ENCODE measurements at regions of chr5 and their contacts with region 1.

Region 1: DNA sequence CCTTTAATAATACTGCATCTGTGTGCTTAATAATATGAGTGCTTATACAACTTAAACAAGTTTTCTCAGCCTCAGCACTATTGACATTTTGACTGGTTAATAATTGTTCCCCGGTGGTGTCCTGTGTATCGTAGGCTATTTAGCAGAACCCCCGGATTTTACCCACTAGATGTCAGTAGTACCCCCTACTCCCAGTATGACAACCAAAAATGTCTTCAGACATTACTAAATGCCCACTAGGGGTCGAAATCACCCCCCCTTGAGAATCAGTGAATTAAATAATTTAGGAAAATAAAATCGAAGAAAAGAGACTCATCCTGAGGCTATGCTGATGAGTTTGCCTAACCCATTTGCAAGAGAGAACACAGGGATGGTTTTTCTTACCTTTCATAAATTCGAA is 166.3 kb downstream of the ATP10B start:
- DNase-seq: no peak
- H3K4me3 ChIP-seq: no peak overlapping the region
- H3K27ac ChIP-seq: no peak overlapping the region
- H3K27me3 ChIP-seq: no peaks in the 10 kb centered on the region
- CTCF ChIP-seq: peak in 52 of 56 donors; percentile 12 to 64 (median 42)

Region 2: GRCh38 chr5:160787240-160787639 is 101.5 kb after region 1 on chr5:
- intact Hi-C with region 1: loop called in 1 of 2 experiments (anchors 10 kb)
- DNase-seq: no peak
- H3K4me3 ChIP-seq: no peak overlapping the region
- H3K27ac ChIP-seq: peak overlapping the region in 39 of 59 donors; percentile 4 to 83 (median 65)
- H3K27me3 ChIP-seq: no peaks in the 10 kb centered on the region
- CTCF ChIP-seq: peak in 48 of 56 donors; percentile 13 to 59 (median 40)

Region 3: DNA sequence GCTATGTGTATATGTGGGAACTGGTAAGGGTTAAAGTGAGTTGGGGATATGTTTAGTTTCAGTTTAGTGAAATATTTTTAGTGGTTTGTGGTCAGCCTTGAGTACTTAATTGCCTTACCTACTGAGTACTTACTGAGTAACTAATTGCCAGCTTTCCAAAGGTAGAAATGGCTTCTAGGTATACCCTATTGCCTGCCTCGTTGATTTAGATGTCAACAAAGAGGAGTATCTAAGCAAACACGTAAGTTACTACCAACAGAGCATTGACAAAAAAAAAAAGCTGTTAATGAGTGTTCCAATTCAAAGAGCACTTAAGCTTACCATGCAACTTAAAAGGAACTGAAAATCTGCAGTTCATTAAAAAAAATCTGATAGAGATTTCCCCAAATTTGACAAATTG is 157.5 kb after region 1 on chr5:
- intact Hi-C with region 1: loop called in 1 of 2 experiments (anchors 10 kb)
- DNase-seq: no peak
- H3K4me3 ChIP-seq: no peak overlapping the region
- H3K27ac ChIP-seq: no peak overlapping the region
- H3K27me3 ChIP-seq: no peaks in the 10 kb centered on the region
- CTCF ChIP-seq: no peak

Measured in dorsolateral prefrontal cortex (tissue), 120 donors.